ENCODE measurements at regions of chr1 and their contacts with region 1.

Region 1: DNA sequence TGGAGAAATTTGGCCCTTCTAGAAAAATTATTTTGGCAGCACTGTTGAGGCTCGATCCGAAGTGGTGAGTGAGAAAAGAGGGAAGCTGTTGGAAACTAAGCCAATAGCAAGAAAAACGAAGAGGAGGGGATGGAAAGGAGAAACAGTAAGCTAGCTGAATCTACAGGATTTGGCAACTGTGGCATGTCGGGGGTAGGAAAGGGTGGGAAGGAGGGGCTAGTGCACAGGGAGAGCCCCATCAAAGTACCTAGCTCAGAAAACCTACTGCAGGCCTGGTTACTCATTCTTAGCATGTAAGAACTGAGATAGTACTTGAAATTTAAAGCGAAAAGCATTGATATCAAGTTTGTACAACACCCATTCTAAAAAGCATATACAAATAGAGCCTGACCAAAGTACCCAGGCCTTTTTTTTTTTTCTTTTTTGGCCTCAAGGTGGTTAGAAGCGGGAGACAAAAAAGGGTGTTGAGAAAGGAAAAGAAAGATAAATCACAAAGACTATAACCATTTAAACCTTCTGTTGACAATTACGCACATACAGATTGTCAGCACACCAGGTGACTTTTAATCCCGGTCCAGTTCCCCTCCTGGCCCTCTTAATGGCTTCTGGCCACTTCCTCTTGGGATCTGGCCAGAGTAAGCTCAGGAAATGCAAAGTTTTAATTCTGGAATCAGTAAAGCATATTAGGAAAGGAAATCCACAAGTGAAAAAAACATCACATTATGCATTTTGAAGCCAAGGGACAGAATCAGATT is 50.4 kb downstream of the SLC16A1 start:
- DNase-seq: peak; percentile 74
- H3K4me3 ChIP-seq: peak overlapping the region in 1 of 4 donors; percentile 29
- H3K27ac ChIP-seq: peak overlapping the region; percentile 84 to 86 (median 86)
- H3K4me1 ChIP-seq: peaks cover 6 to 36% (median 21%) of the 10 kb centered on the region in 4 donors
- H3K27me3 ChIP-seq: no peaks in the 10 kb centered on the region
- CTCF ChIP-seq: no peak
- EP300 ChIP-seq: no peak
- POLR2A ChIP-seq: no peak

Region 2: DNA sequence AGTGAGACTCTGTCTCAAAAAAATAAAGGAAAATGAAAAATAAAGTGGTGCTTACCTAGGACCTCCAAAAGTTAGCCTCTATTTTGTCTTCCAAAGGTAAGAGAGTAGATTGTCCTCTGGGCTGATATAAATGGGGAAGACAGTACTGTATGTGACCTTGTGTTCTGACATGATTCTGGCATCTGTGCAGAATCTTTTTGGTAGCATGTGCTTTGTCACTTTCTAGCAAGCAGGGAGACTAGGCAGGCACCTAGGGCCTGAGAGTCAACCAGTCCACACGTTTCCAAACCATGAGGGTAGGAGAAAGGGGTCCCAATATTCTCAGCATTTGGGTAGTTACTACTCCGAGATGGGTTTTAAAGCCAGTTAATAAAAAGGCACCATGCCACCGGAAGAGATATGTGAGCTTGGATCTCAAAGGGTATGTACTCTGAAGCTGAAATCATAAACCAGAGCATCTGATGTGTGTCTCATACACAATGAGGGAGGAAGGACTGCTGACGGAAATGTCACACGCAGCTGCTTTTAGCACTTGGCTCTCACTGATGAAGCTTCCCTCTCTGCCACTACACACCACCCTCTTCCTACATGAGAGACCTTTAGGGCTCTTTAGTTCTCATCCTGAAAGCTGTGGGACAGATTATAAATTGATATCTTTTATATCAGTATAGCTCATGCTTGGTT is 77.4 kb after region 1 on chr1:
- in situ Hi-C with region 1: no loop called
- intact Hi-C with region 1: no loop called
- DNase-seq: no peak
- H3K4me3 ChIP-seq: no peak overlapping the region
- H3K27ac ChIP-seq: peak overlapping the region in 1 of 4 donors; percentile 12
- H3K4me1 ChIP-seq: peaks cover 0 to 18% (median 3%) of the 10 kb centered on the region in 4 donors
- H3K27me3 ChIP-seq: no peaks in the 10 kb centered on the region
- CTCF ChIP-seq: no peak
- EP300 ChIP-seq: no peak
- POLR2A ChIP-seq: no peak

Region 3: DNA sequence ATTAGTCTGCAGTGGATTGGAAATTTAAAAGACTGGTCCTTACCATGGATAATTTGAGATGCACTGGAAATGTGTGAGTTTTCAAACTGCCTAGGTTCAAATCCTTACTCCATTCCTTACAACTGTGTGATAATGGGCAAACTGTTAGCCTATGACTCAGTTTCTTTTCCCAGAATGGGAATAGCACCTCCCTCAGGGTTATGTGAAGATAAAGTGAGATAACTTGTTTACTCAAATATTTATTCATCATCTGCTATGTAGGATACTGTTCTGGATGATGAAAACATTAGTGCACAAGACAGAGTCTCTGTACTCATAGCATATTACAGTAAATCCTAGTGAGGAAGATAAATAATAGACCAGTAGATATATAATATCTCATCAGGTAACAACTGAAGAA is 196.0 kb after region 1 on chr1:
- in situ Hi-C with region 1: no loop called
- intact Hi-C with region 1: no loop called
- DNase-seq: no peak
- H3K4me3 ChIP-seq: no peak overlapping the region
- H3K27ac ChIP-seq: no peak overlapping the region
- H3K4me1 ChIP-seq: no peaks in the 10 kb centered on the region
- H3K27me3 ChIP-seq: no peaks in the 10 kb centered on the region
- CTCF ChIP-seq: no peak
- EP300 ChIP-seq: no peak
- POLR2A ChIP-seq: no peak

Region 4: GRCh38 chr1:114195819-114196218 is 1290.2 kb after region 1 on chr1:
- in situ Hi-C with region 1: no loop called
- intact Hi-C with region 1: loop called (anchors 5 kb)
- DNase-seq: no peak
- H3K4me3 ChIP-seq: no peak overlapping the region
- H3K27ac ChIP-seq: no peak overlapping the region
- H3K4me1 ChIP-seq: no peaks in the 10 kb centered on the region
- H3K27me3 ChIP-seq: peaks cover 17% of the 10 kb centered on the region
- CTCF ChIP-seq: no peak
- EP300 ChIP-seq: no peak
- POLR2A ChIP-seq: no peak

Measured in transverse colon (tissue), 4 donors.